GM12878 (cell line): ENCODE measurements at regions of chr14 and their contacts with region 1.

Region 1: GRCh38 chr14:59175404-59175803 is 13.1 kb upstream of the DAAM1 start:
- DNase-seq: peak; percentile 92
- ATAC-seq: peak; percentile 99
- H3K4me3 ChIP-seq: no peak overlapping the region
- H3K27ac ChIP-seq: no peak overlapping the region; the same call in 1 of the 2 replicates
- H3K4me1 ChIP-seq: peaks cover 14% of the 10 kb centered on the region
- H3K27me3 ChIP-seq: no peaks in the 10 kb centered on the region
- CTCF ChIP-seq: no peak
- EP300 ChIP-seq: peak; percentile 74 to 91; a peak in 3 of 4 replicates
- POLR2A ChIP-seq: no peak
- RAD21 ChIP-seq: peak; percentile 29; the same call in 1 of the 2 replicates

Region 2: DNA sequence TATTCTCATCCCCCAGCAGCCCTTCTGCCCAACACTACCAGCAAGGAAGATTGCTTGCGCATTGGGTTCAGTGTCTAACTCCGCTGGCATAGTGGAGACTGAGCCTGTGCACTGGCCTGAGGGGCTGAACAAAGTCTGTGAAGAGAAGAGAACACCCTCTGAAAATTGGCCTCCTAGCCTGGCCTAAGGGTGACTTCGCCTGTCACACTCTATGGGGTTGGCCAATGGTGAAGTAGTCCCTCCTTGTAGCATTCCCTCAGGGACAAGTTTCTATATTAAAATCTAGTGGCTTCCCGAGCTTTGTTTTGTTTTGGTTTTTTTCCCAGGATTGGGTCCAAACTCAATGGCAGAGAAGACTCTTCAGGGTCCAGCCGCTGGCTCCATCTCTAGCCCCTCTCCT is 36.1 kb before region 1 on chr14:
- CTCF ChIA-PET with region 1: no interaction called
- POLR2A ChIA-PET with region 1: no interaction called
- RAD21 ChIA-PET with region 1: no interaction called
- SMC1A ChIA-PET with region 1: no interaction called
- in situ Hi-C with region 1: no loop called
- intact Hi-C with region 1: loop called (anchors 5 kb)
- DNase-seq: no peak
- ATAC-seq: no peak
- H3K4me3 ChIP-seq: no peak overlapping the region
- H3K27ac ChIP-seq: no peak overlapping the region
- H3K4me1 ChIP-seq: no peaks in the 10 kb centered on the region
- H3K27me3 ChIP-seq: no peaks in the 10 kb centered on the region
- CTCF ChIP-seq: no peak
- EP300 ChIP-seq: no peak
- POLR2A ChIP-seq: no peak
- RAD21 ChIP-seq: no peak